ENCODE measurements at regions of chr22 and their contacts with region 1.

Region 1: DNA sequence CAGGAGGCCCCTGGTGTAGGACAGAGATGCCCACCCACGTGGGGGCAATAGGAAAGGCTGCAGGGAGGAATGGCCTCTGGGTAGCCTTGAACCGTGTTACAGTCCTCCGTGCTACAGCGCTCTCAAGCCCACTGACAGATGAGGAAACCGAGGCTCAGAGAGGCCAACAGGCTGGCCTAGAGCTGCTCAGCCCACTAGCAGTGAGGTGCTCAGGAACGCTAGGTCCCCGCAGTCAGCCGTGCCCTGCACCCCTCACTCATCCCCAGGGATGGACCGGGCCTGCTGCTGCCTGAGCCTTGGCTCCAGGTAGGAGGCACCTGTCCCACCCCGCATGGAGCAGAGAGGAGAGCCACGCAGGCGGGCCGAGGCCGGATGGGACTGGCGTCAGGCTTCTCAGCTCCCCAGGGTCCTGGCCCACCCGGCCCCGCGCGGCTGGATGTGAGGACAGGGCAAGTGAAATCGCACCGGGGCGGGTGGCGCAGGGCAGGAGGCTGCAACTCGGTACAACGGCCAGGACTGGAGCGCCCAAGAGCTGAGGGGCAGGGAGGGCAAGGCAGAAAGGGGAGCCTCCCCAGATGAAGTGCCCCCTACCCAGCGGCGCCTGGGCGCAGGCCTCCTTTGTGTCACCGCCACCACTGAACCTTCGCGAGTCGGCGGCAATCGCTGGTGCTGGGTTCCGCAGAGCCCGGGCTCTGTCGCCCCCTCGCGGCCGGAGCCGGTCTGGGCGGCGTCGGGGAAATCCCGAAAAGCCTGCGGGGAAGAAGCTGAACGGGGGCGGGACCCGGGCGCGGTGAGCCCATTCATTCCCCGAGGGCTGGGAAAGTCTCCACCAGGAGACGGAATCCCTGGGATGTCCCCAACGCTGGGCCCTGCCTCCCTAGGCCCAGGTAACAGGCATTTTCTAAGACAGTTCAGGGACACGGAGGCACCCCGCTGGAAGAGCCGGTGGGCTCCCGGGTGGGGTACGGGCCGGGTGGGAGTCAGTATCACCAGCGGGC is 8.4 kb upstream of the SLC2A11 start:
- DNase-seq: peak; percentile 86
- H3K4me3 ChIP-seq: peak overlapping the region; percentile 11 to 36
- H3K27ac ChIP-seq: no peak overlapping the region
- H3K4me1 ChIP-seq: peaks cover 23% of the 10 kb centered on the region
- H3K27me3 ChIP-seq: no peaks in the 10 kb centered on the region
- CTCF ChIP-seq: peak; percentile 93 to 97 (median 97)
- POLR2A ChIP-seq: no peak

Region 2: DNA sequence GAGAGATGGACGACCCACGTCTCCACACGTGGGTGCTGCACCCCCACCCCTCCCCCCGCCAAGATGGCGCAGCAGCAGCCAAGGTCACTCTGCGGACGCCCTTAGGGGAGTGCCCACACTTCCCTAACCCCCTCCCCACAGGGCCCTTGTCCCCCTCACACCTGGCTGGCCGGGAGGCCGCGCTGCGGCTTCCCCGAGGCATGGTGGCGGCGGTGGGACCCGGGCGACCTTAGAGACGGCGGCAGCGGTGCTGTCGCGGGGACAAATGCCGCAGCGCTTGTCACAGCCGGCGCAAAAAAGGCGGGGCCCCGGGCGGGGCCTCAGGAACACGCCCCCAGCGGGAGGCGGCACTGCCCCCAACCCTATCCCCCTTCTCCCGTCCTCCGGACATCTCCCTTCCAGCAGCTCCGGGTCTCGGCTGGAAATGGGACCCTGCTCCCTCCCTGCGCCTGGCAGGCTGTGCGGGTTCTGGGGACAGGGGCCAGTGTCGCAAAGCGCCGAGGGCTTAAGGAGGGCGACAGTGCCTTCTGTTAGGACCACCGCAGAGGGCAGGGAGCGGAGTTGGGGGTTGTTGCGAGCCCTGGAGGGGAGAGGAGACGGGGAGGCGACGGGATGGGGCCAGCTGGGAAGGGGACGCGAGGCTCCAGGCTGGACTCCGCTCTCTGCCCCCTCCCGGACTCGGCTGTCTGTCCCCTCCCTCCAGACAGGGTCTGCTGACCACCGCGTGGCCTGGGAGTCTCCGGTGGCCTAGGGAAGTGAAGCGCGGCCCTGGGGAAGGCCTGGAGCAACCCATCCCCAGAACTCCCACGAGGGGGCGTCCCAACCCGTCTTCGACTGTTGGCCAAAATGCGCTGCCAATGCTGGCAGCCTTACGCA is 81.4 kb before region 1 on chr22 and contains the start of gene CHCHD10:
- intact Hi-C with region 1: loop called (anchors 5 kb)
- DNase-seq: peak; percentile 91
- H3K4me3 ChIP-seq: peak within 1 kb of the TSS; percentile 59 to 69
- H3K27ac ChIP-seq: peak within 1 kb of the TSS; percentile 52 to 76
- H3K4me1 ChIP-seq: peaks cover 13% of the 10 kb centered on the region
- H3K27me3 ChIP-seq: no peaks in the 10 kb centered on the region
- CTCF ChIP-seq: peak; percentile 74 to 80 (median 79)
- POLR2A ChIP-seq: no peak
- total RNA-seq, gene CHCHD10: 24.0 to 30.2 TPM